CD8-positive, alpha-beta T cell (primary cell): ENCODE measurements at regions of chr11 and their contacts with region 1.

Region 1: GRCh38 chr11:97389270-97389669 is 999.5 kb downstream of the JRKL start:
- DNase-seq: no peak
- ATAC-seq: no peak
- H3K4me3 ChIP-seq: no peak overlapping the region
- H3K4me3 Mint-ChIP-seq: no peak overlapping the region
- H3K27ac ChIP-seq: no peak overlapping the region
- H3K27ac Mint-ChIP-seq: no peak overlapping the region
- H3K4me1 ChIP-seq: no peaks in the 10 kb centered on the region
- H3K4me1 Mint-ChIP-seq: no peaks in the 10 kb centered on the region
- H3K27me3 ChIP-seq: no peaks in the 10 kb centered on the region
- H3K27me3 Mint-ChIP-seq: no peaks in the 10 kb centered on the region
- CTCF ChIP-seq: no peak

Region 2: GRCh38 chr11:96464700-96465307 is 924.5 kb before region 1 on chr11:
- CTCF ChIA-PET with region 1: no interaction called
- POLR2A ChIA-PET with region 1: no interaction called
- intact Hi-C with region 1: loop called in 1 of 2 experiments (anchors 5 kb)
- DNase-seq: peak in 3 of 9 experiments; percentile 4 to 67 (median 55)
- ATAC-seq: peak; percentile 66
- H3K4me3 ChIP-seq: no peak overlapping the region
- H3K4me3 Mint-ChIP-seq: no peak overlapping the region
- H3K27ac ChIP-seq: no peak overlapping the region
- H3K27ac Mint-ChIP-seq: no peak overlapping the region
- H3K4me1 ChIP-seq: peaks cover 5% of the 10 kb centered on the region
- H3K4me1 Mint-ChIP-seq: peaks cover 6% of the 10 kb centered on the region
- H3K27me3 ChIP-seq: peaks cover 0 to 1% of the 10 kb centered on the region in 2 experiments
- H3K27me3 Mint-ChIP-seq: peaks cover 6% of the 10 kb centered on the region
- CTCF ChIP-seq: peak; percentile 83

Region 3: GRCh38 chr11:97471480-97471879 is 82.2 kb after region 1 on chr11:
- CTCF ChIA-PET with region 1: no interaction called
- POLR2A ChIA-PET with region 1: no interaction called
- intact Hi-C with region 1: no loop called
- DNase-seq: no peak
- ATAC-seq: no peak
- H3K4me3 ChIP-seq: no peak overlapping the region
- H3K4me3 Mint-ChIP-seq: no peak overlapping the region
- H3K27ac ChIP-seq: no peak overlapping the region
- H3K27ac Mint-ChIP-seq: no peak overlapping the region
- H3K4me1 ChIP-seq: no peaks in the 10 kb centered on the region
- H3K4me1 Mint-ChIP-seq: no peaks in the 10 kb centered on the region
- H3K27me3 ChIP-seq: no peaks in the 10 kb centered on the region
- H3K27me3 Mint-ChIP-seq: no peaks in the 10 kb centered on the region
- CTCF ChIP-seq: no peak